ENCODE measurements at regions of chr2 and their contacts with region 1.

Region 1: GRCh38 chr2:70301344-70302194 is at the start of gene FAM136A:
- DNase-seq: peak; percentile 89
- ATAC-seq: peak; percentile 96
- total RNA-seq, gene FAM136A: 25.3 to 28.9 TPM

Region 2: GRCh38 chr2:69890881-69891280 is 410.7 kb before region 1 on chr2:
- intact Hi-C with region 1: no loop called
- DNase-seq: no peak
- ATAC-seq: no peak

Region 3: DNA sequence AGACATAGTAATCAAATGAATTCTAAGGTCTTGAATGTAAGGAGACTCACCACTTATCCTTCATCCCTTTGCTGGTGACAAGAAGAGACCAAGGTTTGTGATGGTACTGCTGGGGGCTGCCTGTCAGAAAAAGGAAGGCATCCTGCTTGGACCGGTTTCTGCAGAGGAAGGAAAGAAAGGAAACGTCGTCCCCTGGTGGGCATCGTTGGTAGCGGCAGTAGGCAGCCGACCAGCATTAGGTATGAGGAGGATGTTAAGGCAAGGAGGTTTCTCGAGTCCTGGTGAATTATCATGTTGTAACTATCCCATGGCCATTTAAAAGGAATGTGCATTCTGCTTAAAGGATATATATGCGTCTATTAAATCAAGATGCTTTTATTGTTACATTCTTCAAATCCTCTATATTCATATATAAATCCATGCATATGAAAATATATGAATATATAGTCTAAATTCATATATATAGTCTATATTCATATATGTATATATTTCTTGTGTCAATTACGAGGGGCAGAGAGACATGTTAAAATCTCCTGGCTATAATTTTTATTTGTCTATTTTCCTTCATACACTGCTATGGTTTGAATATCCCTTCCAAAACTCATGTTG is 346.4 kb after region 1 on chr2:
- intact Hi-C with region 1: loop called in 1 of 2 experiments (anchors 2 kb)
- DNase-seq: peak; percentile 53
- ATAC-seq: peak; percentile 62 to 71